Activated CD4-positive, alpha-beta T cell treated with anti-CD3 and anti-CD28 coated beads for 36 hours (primary cell): ENCODE measurements at regions of chr17 and their contacts with region 1.

Region 1: DNA sequence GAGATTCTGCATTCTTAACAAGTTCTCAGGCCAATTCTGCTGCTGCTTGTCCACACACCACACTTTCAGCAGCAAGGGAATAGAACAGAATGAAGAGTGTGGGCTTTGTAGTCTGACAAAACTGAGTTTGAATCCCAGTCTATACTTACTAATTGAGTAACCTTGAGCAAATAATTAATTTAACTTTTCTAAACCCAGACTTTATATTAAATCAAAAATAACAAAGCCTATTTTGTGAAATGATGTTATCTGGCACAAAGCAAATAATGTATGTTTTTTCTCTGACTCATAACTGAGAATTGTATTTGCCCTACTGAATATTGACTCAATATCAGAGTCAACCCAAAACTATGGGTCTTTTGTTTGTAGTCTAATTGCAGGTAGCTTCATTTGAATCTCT is 77.9 kb upstream of the TANC2 start:
- DNase-seq: no peak
- ATAC-seq: no peak
- H3K4me3 Mint-ChIP-seq: no peak overlapping the region
- H3K27ac Mint-ChIP-seq: no peak overlapping the region
- H3K4me1 Mint-ChIP-seq: peaks cover 8% of the 10 kb centered on the region
- H3K27me3 Mint-ChIP-seq: peaks cover 20% of the 10 kb centered on the region

Region 2: GRCh38 chr17:62911114-62911513 is 23.0 kb after region 1 on chr17:
- CTCF ChIA-PET with region 1: no interaction called
- POLR2A ChIA-PET with region 1: interaction called, 12 read pairs
- intact Hi-C with region 1: no loop called
- DNase-seq: no peak
- ATAC-seq: no peak
- H3K4me3 Mint-ChIP-seq: no peak overlapping the region
- H3K27ac Mint-ChIP-seq: no peak overlapping the region
- H3K4me1 Mint-ChIP-seq: no peaks in the 10 kb centered on the region
- H3K27me3 Mint-ChIP-seq: peaks cover 24% of the 10 kb centered on the region